PC-3 (cell line): ENCODE measurements at regions of chr10 and their contacts with region 1.

Region 1: DNA sequence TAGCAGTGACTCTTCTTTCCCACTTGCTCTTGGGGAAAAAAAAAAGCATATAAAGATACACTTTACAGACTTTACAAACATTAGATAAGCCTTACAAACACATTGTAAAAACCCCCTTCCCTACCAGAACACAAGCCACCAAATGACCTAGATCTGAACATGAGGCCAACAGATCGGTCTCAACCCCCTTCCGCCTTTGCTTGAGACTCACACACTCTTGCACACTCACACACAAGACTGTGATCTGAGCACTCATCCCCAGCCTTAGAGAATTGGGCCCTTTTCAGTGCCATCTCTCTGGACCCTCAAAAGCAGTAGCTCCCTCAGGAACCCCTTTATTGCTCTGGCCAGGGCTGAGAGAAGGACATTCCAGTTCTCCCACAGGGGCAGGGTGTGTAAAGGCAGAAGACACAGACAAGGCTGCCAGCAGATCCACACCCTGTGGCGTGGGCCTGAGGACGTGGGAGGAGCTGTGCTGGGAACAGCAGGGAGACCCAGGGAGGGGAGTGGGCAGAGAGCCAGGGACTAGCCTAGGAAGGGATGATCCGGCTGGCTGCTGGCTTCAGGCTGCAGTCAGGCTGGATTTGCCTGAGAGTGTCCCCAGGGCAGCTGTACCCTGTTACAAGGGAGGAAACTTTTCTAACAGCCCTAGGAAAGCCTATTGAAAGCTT is 206.7 kb downstream of the KIAA1217 start:
- DNase-seq: peak; percentile 3
- ATAC-seq: peak; percentile 49; the same call in 1 of the 2 replicates
- H3K4me3 ChIP-seq: no peak overlapping the region
- H3K27ac ChIP-seq: no peak overlapping the region
- H3K4me1 ChIP-seq: no peaks in the 10 kb centered on the region
- H3K27me3 ChIP-seq: no peaks in the 10 kb centered on the region
- CTCF ChIP-seq: no peak

Region 2: GRCh38 chr10:24209946-24210491 is 205.6 kb before region 1 on chr10:
- CTCF ChIA-PET with region 1: no interaction called
- POLR2A ChIA-PET with region 1: no interaction called
- intact Hi-C with region 1: no loop called
- DNase-seq: peak; percentile 72
- ATAC-seq: peak; percentile 39
- H3K4me3 ChIP-seq: peak overlapping the region; percentile 68
- H3K27ac ChIP-seq: peak overlapping the region; percentile 98
- H3K4me1 ChIP-seq: peaks cover 33% of the 10 kb centered on the region
- H3K27me3 ChIP-seq: no peaks in the 10 kb centered on the region
- CTCF ChIP-seq: no peak

Region 3: GRCh38 chr10:24349379-24350001 is 66.1 kb before region 1 on chr10:
- CTCF ChIA-PET with region 1: no interaction called
- POLR2A ChIA-PET with region 1: no interaction called
- intact Hi-C with region 1: no loop called
- DNase-seq: peak; percentile 87
- ATAC-seq: peak; percentile 90
- H3K4me3 ChIP-seq: no peak overlapping the region
- H3K27ac ChIP-seq: peak overlapping the region; percentile 83
- H3K4me1 ChIP-seq: peaks cover 37% of the 10 kb centered on the region
- H3K27me3 ChIP-seq: no peaks in the 10 kb centered on the region
- CTCF ChIP-seq: no peak

Region 4: DNA sequence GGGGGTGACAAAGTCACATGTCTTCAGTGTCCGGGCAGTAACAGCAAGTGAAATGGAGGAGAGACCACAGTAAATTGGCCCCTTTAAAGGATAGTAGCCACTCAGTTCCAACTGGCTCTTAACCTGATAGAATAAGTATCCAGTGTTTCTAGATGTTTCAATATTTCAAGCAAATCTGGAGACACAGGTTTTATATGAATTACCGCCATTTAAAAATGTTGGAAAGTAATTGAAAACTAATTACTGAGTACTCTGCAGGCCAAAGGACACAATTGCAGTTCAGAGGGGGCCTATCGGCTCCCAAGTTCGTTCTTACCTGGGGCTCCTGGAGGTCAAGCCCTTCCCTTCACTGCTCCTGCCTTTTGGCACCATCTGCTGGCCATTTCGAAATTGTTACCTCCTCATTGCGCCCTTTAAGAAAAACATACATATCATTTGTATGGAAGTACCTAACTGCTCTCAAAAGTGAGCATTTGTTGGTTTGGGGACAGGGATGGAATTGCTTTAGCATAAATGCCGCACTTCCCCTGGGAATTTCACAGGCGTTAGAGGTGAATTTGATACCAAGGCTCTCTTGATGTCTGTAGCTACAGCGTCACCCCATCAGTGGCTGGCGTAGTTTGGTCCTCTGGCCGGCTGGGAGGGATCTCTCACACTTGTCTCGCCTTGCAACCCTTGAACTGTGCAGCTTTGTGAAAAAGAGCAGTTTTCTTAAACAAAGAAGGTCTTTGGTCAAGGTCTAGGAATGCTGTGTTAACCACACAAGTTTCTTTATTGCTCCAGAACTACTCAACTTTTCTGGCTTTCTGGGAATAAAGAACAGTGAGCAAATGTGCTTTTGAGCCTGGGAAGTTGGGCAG is 88.1 kb after region 1 on chr10:
- CTCF ChIA-PET with region 1: no interaction called
- POLR2A ChIA-PET with region 1: no interaction called
- intact Hi-C with region 1: loop called (anchors 1 kb)
- DNase-seq: peak; percentile 69
- ATAC-seq: peak; percentile 55
- H3K4me3 ChIP-seq: no peak overlapping the region
- H3K27ac ChIP-seq: no peak overlapping the region
- H3K4me1 ChIP-seq: no peaks in the 10 kb centered on the region
- H3K27me3 ChIP-seq: no peaks in the 10 kb centered on the region
- CTCF ChIP-seq: peak; percentile 85